Activated B cell treated with CpG ODN at 0.5 μM for 24 hours (primary cell): ENCODE measurements at regions of chr7 and their contacts with region 1.

Region 1: DNA sequence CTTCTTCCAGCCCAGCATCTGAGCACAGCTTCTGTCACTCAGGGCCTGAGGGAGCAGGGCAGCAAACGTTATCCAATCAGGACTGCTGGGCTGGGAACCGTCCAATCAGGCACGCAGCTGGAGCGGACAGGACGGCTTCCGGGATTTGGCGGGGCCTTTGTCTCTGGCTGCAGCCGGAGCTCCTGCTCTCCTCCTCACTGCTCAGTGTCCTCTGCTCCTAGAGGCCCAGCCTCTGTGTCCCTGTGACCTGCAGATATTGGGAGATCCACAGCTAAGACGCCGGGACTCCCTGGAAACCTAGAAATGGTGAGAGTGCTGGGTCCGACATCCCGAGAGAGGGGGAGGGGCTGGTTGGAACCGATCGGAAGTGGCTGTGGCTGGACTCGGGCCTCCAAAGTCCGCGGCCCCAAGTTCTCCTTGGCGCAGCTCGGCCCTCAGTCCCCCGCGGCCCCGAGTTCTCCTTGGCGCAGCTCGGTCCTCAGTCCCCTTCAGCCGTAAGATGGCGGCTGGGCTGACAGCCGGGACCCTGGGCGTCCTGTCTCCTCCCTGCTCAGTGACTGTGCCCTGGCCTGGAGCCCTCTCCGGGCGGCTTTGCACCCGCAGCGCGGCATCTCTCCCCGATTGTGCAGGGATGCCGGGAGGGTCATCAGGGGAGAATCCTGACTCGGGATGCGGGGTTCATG is at the start of gene ZNF107:
- DNase-seq: peak; percentile 69
- ATAC-seq: peak; percentile 93
- H3K4me3 Mint-ChIP-seq: peak within 1 kb of the TSS; percentile 98
- H3K27ac Mint-ChIP-seq: peak within 1 kb of the TSS; percentile 96
- H3K4me1 Mint-ChIP-seq: peaks cover 56% of the 10 kb centered on the region
- H3K27me3 Mint-ChIP-seq: no peaks in the 10 kb centered on the region
- CTCF ChIP-seq: no peak
- total RNA-seq, gene ZNF107: 40.3 and 50.5 TPM in 2 replicates

Region 2: DNA sequence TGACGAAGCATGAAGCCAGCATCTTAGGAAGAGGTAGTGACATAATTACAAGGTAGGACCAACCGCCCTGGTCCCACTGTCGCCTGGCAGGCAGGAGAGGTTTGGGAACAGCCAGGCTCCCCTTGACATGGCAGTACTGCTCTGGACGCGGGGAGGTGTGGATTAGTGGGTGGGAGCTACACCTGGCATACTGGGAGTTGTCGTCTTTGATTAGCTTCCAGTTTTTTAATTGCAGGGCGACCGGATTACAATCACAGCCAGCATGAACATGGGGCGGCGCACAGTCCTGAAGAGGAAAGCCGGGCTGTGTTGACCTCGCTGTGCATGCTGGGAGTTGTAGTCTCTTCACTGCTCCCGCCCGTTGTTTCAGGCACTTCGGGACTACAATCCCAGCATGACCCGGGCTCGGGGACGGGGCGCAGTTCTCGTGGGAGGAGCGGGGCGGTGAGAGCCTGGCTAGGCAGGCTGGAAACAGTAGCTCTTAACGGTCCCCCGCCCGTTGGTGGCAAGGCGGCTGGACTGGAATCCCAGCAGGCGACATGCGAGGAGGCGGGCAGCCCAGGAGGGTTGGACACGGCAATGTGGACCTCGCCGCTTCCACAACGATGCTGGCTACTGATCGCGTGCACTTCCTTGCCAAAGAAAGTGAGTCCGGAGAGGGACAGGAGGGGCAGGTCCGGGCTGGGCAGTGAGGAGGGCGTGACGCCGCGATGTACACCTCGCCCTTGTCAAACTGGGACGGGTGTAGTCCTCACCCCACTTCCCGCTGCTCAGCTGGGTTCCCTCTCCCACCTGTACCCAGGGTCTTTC is 765.5 kb before region 1 on chr7:
- CTCF ChIA-PET with region 1: no interaction called
- POLR2A ChIA-PET with region 1: no interaction called
- intact Hi-C with region 1: loop called (anchors 1 kb)
- DNase-seq: peak; percentile 61
- ATAC-seq: peak; percentile 92
- H3K4me3 Mint-ChIP-seq: peak overlapping the region; percentile 96
- H3K27ac Mint-ChIP-seq: peak overlapping the region; percentile 95
- H3K4me1 Mint-ChIP-seq: peaks cover 2% of the 10 kb centered on the region
- H3K27me3 Mint-ChIP-seq: no peaks in the 10 kb centered on the region
- CTCF ChIP-seq: no peak

Region 3: GRCh38 chr7:64307254-64308015 is 358.7 kb before region 1 on chr7:
- CTCF ChIA-PET with region 1: no interaction called
- POLR2A ChIA-PET with region 1: interaction called, 29 read pairs
- intact Hi-C with region 1: loop called (anchors 2 kb)
- DNase-seq: peak; percentile 87
- ATAC-seq: peak; percentile 93
- H3K4me3 Mint-ChIP-seq: peak overlapping the region; percentile 94
- H3K27ac Mint-ChIP-seq: peak overlapping the region; percentile 98
- H3K4me1 Mint-ChIP-seq: peaks cover 40% of the 10 kb centered on the region
- H3K27me3 Mint-ChIP-seq: no peaks in the 10 kb centered on the region
- CTCF ChIP-seq: no peak

Region 4: GRCh38 chr7:64562626-64563275 is 103.4 kb before region 1 on chr7 and contains the start of gene ZNF680:
- CTCF ChIA-PET with region 1: no interaction called
- POLR2A ChIA-PET with region 1: interaction called, 18 read pairs
- intact Hi-C with region 1: loop called (anchors 2 kb)
- DNase-seq: peak; percentile 75
- ATAC-seq: peak; percentile 100
- H3K4me3 Mint-ChIP-seq: peak within 1 kb of the TSS; percentile 99
- H3K27ac Mint-ChIP-seq: peak within 1 kb of the TSS; percentile 93
- H3K4me1 Mint-ChIP-seq: peaks cover 28% of the 10 kb centered on the region
- H3K27me3 Mint-ChIP-seq: no peaks in the 10 kb centered on the region
- CTCF ChIP-seq: no peak
- total RNA-seq, gene ZNF680: 17.1 and 22.0 TPM in 2 replicates

Region 5: DNA sequence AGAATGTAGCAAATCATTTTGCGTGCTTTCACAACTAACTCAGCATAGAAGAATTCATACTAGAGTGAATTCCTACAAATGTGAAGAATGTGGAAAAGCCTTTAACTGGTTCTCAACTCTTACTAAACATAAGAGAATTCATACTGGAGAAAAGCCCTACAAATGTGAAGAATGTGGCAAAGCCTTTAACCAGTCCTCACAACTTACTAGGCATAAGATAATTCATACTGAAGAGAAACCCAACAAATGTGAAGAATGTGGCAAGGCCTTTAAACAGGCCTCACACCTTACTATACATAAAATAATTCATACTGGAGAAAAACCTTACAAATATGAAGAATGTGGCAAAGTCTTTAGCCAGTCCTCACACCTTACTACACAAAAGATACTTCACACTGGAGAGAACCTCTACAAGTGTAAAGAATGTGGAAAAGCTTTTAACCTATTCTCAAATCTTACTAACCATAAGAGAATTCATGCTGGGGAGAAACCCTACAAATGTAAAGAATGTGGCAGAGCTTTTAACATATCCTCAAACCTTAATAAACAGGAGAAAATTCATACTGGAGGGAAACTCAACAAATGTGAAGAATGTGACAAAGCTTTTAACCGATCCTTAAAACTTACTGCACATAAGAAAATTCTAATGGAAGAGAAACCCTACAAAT is 40.6 kb after region 1 on chr7:
- CTCF ChIA-PET with region 1: no interaction called
- POLR2A ChIA-PET with region 1: no interaction called
- intact Hi-C with region 1: loop called (anchors 5 kb)
- DNase-seq: no peak
- ATAC-seq: no peak
- H3K4me3 Mint-ChIP-seq: no peak overlapping the region
- H3K27ac Mint-ChIP-seq: no peak overlapping the region
- H3K4me1 Mint-ChIP-seq: no peaks in the 10 kb centered on the region
- H3K27me3 Mint-ChIP-seq: no peaks in the 10 kb centered on the region
- CTCF ChIP-seq: no peak

Region 6: GRCh38 chr7:64902806-64903721 is 236.9 kb after region 1 on chr7 and contains the start of gene ZNF273:
- CTCF ChIA-PET with region 1: no interaction called
- POLR2A ChIA-PET with region 1: interaction called, 15 read pairs
- intact Hi-C with region 1: loop called (anchors 1 kb)
- DNase-seq: peak; percentile 72
- ATAC-seq: peak; percentile 100
- H3K4me3 Mint-ChIP-seq: peak within 1 kb of the TSS; percentile 97
- H3K27ac Mint-ChIP-seq: peak within 1 kb of the TSS; percentile 91
- H3K4me1 Mint-ChIP-seq: peaks cover 52% of the 10 kb centered on the region
- H3K27me3 Mint-ChIP-seq: no peaks in the 10 kb centered on the region
- CTCF ChIP-seq: no peak
- total RNA-seq, gene ZNF273: 10.6 and 12.3 TPM in 2 replicates

Region 7: GRCh38 chr7:65037740-65038678 is 371.9 kb after region 1 on chr7:
- CTCF ChIA-PET with region 1: no interaction called
- POLR2A ChIA-PET with region 1: interaction called, 4 read pairs
- intact Hi-C with region 1: loop called (anchors 1 kb)
- DNase-seq: peak; percentile 61
- ATAC-seq: peak; percentile 94
- H3K4me3 Mint-ChIP-seq: peak overlapping the region; percentile 75
- H3K27ac Mint-ChIP-seq: peak overlapping the region; percentile 65
- H3K4me1 Mint-ChIP-seq: peaks cover 8% of the 10 kb centered on the region
- H3K27me3 Mint-ChIP-seq: no peaks in the 10 kb centered on the region
- CTCF ChIP-seq: no peak